ENCODE measurements at regions of chr5 and their contacts with region 1.

Region 1: GRCh38 chr5:140351609-140352334 is 5.4 kb upstream of the HBEGF start:
- DNase-seq: peak; percentile 75
- CTCF ChIP-seq: peak; percentile 76

Region 2: GRCh38 chr5:140244525-140245025 is 107.2 kb before region 1 on chr5:
- in situ Hi-C with region 1: loop called (anchors 5 kb)
- DNase-seq: peak; percentile 73
- CTCF ChIP-seq: peak; percentile 93

Region 3: GRCh38 chr5:140401362-140402257 is 49.8 kb after region 1 on chr5 and contains the start of gene ANKHD1:
- in situ Hi-C with region 1: no loop called
- DNase-seq: peak; percentile 95
- CTCF ChIP-seq: no peak

Measured in GM13977 (cell line).